ENCODE measurements at regions of chr4 and their contacts with region 1.

Region 1: DNA sequence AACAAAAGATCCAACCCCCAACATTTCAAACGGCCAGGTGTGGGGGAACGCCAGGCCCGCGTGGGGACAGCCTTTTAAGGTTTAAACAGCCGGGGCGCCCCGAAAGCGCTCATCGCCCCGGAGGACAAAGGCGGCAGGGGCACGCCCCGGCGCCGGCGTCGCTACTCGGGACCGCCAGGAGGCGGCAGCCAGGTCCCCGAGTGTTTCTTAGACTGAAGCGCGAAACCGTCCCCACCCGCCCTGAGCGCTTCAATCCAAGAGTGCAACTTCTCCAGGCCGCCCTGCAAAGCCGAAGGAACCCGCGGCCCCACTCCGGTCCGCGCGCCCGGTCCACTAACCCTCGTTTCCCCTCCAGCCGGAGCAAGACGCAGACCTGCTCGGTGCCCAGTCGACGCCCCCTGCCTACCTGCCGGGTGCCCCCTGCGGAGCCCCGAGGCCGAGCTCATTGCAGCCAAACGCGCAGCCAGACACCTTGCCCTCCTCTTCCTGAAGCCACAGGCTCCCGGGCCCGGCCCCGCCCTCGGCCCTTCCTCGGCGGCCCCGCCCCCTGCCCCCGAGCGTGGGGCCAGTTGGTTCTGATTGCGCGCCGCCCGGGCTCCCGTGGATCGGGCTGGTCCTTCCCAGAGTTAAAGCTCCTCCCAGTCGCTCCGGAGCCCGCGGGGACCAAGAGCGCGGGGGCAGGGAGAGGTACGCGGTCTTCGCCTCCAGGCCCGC is at the start of gene CASP6:
- DNase-seq: peak; percentile 79
- H3K4me3 Mint-ChIP-seq: peak within 1 kb of the TSS; percentile 94
- H3K27ac Mint-ChIP-seq: peak within 1 kb of the TSS; percentile 95
- H3K4me1 Mint-ChIP-seq: peaks cover 28% of the 10 kb centered on the region
- H3K27me3 Mint-ChIP-seq: no peaks in the 10 kb centered on the region
- CTCF ChIP-seq: peak; percentile 60
- total RNA-seq, gene CASP6: 7.9 and 8.1 TPM in 2 replicates

Region 2: GRCh38 chr4:109559983-109560686 is 143.0 kb before region 1 on chr4 and contains the start of gene MCUB:
- CTCF ChIA-PET with region 1: interaction called, 7 read pairs
- POLR2A ChIA-PET with region 1: interaction called, 5 read pairs
- intact Hi-C with region 1: loop called (anchors 1 kb)
- DNase-seq: peak; percentile 92
- H3K4me3 Mint-ChIP-seq: peak within 1 kb of the TSS; percentile 80
- H3K27ac Mint-ChIP-seq: peak within 1 kb of the TSS; percentile 66
- H3K4me1 Mint-ChIP-seq: peaks cover 10% of the 10 kb centered on the region
- H3K27me3 Mint-ChIP-seq: no peaks in the 10 kb centered on the region
- CTCF ChIP-seq: no peak
- total RNA-seq, gene MCUB: 11.0 and 16.3 TPM in 2 replicates

Region 3: DNA sequence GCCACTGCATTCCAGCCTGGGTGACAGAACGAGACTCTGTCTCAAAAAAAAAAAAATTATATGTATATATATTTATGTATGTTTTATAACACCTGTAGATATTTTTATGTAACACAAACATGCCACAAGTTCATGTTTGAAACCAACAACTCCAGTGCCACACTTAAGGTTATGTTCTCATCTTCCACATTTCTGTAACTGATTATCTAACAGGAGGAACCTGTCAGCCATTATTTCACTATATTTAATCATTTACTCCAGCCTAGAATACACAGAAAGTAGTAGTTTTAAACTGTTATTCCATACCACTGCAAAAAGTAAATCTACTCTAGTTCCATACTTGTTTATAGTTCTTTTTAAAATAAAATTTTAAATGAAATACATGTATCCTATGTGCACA is 110.7 kb before region 1 on chr4:
- CTCF ChIA-PET with region 1: no interaction called
- POLR2A ChIA-PET with region 1: no interaction called
- intact Hi-C with region 1: no loop called
- DNase-seq: no peak
- H3K4me3 Mint-ChIP-seq: no peak overlapping the region
- H3K27ac Mint-ChIP-seq: no peak overlapping the region
- H3K4me1 Mint-ChIP-seq: no peaks in the 10 kb centered on the region
- H3K27me3 Mint-ChIP-seq: no peaks in the 10 kb centered on the region
- CTCF ChIP-seq: no peak

Region 4: GRCh38 chr4:109729718-109730618 is 26.9 kb after region 1 on chr4 and contains the start of gene PLA2G12A:
- CTCF ChIA-PET with region 1: interaction called, 11 read pairs
- POLR2A ChIA-PET with region 1: interaction called, 39 read pairs
- intact Hi-C with region 1: loop called (anchors 1 kb)
- DNase-seq: peak; percentile 90
- H3K4me3 Mint-ChIP-seq: peak within 1 kb of the TSS; percentile 88
- H3K27ac Mint-ChIP-seq: peak within 1 kb of the TSS; percentile 52
- H3K4me1 Mint-ChIP-seq: peaks cover 18% of the 10 kb centered on the region
- H3K27me3 Mint-ChIP-seq: no peaks in the 10 kb centered on the region
- CTCF ChIP-seq: no peak
- total RNA-seq, gene PLA2G12A: 52.4 and 58.0 TPM in 2 replicates

Region 5: GRCh38 chr4:109803924-109804571 is 100.9 kb after region 1 on chr4:
- CTCF ChIA-PET with region 1: interaction called, 14 read pairs
- POLR2A ChIA-PET with region 1: interaction called, 4 read pairs
- intact Hi-C with region 1: loop called (anchors 1 kb)
- DNase-seq: peak; percentile 70
- H3K4me3 Mint-ChIP-seq: no peak overlapping the region
- H3K27ac Mint-ChIP-seq: no peak overlapping the region
- H3K4me1 Mint-ChIP-seq: no peaks in the 10 kb centered on the region
- H3K27me3 Mint-ChIP-seq: no peaks in the 10 kb centered on the region
- CTCF ChIP-seq: peak; percentile 41

Region 6: DNA sequence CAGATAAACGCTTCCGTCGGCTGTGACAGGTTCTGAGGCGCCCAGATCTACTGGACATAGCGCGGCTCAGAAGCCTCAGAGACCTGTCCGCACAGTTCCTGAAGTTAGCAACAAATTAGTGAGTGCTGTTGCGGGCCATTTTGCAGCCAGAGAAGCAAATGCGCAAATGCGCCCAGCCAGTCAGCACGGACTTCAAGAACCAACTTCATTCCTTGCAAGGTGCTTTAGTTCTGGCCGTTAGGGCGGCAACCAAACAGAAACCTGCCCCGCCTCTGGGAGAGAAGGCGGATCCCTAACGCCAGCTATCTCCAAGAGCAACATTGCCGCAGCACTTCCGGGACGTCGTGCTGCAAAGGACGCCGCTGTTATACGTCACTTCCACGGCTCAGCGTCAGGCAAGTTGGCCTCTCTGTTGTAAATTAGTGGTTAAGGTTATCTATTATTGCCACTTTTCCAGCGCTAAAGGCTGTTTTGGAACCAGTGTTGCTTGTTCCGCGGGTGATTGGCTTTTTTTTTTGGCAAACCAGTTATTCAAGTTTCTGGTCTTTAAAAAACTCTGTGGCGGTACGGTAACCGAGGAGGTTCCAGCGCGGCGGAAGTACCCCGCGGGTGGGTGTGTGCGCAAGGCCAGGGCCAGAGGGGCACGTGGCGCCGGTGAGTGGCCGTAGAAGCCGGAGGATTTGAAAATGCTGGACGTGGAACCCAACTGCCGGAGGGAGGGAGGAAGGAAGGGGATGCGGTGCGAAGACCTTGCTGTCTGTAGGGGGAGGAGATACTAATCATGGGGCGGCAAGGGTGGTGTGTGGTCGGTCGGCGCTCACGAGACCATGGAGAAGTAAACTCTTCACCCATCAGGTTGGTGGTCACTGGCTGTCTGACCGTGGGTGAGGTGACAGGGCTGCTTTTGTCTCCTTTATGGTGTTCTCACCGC is 112.3 kb after region 1 on chr4 and contains the start of gene GAR1:
- CTCF ChIA-PET with region 1: interaction called, 6 read pairs
- POLR2A ChIA-PET with region 1: interaction called, 13 read pairs
- intact Hi-C with region 1: no loop called
- DNase-seq: peak; percentile 94
- H3K4me3 Mint-ChIP-seq: peak within 1 kb of the TSS; percentile 96
- H3K27ac Mint-ChIP-seq: peak within 1 kb of the TSS; percentile 99
- H3K4me1 Mint-ChIP-seq: peaks cover 28% of the 10 kb centered on the region
- H3K27me3 Mint-ChIP-seq: no peaks in the 10 kb centered on the region
- CTCF ChIP-seq: no peak
- total RNA-seq, gene GAR1: 21.2 and 28.7 TPM in 2 replicates

Region 7: DNA sequence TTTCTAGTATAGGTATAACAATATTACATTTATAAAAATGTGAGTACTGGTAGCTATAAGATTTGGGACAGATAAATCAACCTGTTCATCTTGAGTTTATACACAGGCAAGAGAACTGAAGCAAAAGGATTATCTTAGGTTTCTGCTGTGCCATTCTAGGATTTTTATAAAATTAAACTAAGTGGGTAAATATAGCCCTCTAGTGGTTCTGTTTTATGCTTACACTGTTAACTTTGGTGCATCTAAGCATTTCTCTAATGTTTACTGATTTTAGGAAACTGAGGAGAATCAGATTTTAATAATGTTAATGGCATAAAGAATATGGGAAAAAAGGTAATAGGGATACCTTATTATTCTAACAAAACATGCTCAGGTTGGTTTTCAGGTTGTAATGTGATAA is 123.6 kb after region 1 on chr4:
- CTCF ChIA-PET with region 1: interaction called, 10 read pairs
- POLR2A ChIA-PET with region 1: interaction called, 3 read pairs
- intact Hi-C with region 1: loop called (anchors 1 kb)
- DNase-seq: peak; percentile 20
- H3K4me3 Mint-ChIP-seq: no peak overlapping the region
- H3K27ac Mint-ChIP-seq: no peak overlapping the region
- H3K4me1 Mint-ChIP-seq: no peaks in the 10 kb centered on the region
- H3K27me3 Mint-ChIP-seq: no peaks in the 10 kb centered on the region
- CTCF ChIP-seq: peak; percentile 38

Region 8: GRCh38 chr4:109977854-109978501 is 274.9 kb after region 1 on chr4:
- CTCF ChIA-PET with region 1: interaction called, 19 read pairs
- POLR2A ChIA-PET with region 1: interaction called, 8 read pairs
- intact Hi-C with region 1: loop called (anchors 2 kb)
- DNase-seq: peak; percentile 47
- H3K4me3 Mint-ChIP-seq: no peak overlapping the region
- H3K27ac Mint-ChIP-seq: no peak overlapping the region
- H3K4me1 Mint-ChIP-seq: no peaks in the 10 kb centered on the region
- H3K27me3 Mint-ChIP-seq: no peaks in the 10 kb centered on the region
- CTCF ChIP-seq: peak; percentile 60

Measured in MCF 10A (cell line).